HAP-1 (cell line): ENCODE measurements at regions of chr21 and their contacts with region 1.

Region 1: GRCh38 chr21:25607151-25608043 is at the start of gene MRPL39:
- DNase-seq: peak; percentile 86 to 96
- H3K4me3 ChIP-seq: peak within 1 kb of the TSS; percentile 94
- H3K4me1 ChIP-seq: peaks cover 12% of the 10 kb centered on the region
- H3K27me3 ChIP-seq: no peaks in the 10 kb centered on the region

Region 2: DNA sequence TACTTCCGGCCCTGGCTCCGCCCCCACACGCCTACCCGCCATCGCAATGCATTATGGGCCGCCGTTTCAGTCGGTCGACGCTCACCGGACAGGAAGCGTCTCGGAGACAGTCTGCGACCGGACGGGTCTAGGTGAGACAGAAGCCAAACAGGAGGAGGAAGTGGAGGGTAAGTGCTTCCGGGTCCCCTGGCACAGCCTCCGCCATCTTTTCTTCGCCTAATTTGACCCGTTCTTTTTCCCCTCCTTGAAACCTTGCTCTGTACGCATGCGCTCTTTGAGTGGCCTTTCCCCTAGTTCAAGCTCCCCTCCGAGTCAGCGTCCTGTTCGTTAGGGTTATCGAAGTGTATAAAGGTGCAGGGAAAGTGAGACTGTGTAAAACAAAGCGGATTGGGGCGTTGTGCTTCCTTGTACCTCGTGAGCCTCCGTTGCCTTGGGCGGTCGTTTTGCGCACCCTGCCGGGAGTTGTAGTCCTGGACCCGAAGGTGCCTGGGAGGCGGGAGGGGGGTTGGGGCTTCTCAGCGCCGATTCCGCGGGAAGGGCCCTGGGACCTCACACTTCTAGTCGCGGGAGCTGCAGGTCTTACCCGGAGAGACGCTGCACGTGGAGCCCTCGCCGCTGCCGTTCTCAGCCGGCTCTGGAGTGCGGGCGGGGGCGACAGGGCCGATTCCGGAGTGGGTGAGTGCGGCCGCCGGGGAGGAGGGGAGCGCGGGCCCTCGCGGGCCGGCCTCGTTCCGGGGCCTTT is 127.7 kb after region 1 on chr21 and contains the starts of genes ATP5PF and GABPA:
- in situ Hi-C with region 1: loop called (anchors 5 kb)
- DNase-seq: peak; percentile 98 to 99
- H3K4me3 ChIP-seq: peak within 1 kb of the TSS; percentile 90
- H3K4me1 ChIP-seq: peaks cover 28% of the 10 kb centered on the region
- H3K27me3 ChIP-seq: no peaks in the 10 kb centered on the region